ENCODE measurements at regions of chr11 and their contacts with region 1.

Region 1: DNA sequence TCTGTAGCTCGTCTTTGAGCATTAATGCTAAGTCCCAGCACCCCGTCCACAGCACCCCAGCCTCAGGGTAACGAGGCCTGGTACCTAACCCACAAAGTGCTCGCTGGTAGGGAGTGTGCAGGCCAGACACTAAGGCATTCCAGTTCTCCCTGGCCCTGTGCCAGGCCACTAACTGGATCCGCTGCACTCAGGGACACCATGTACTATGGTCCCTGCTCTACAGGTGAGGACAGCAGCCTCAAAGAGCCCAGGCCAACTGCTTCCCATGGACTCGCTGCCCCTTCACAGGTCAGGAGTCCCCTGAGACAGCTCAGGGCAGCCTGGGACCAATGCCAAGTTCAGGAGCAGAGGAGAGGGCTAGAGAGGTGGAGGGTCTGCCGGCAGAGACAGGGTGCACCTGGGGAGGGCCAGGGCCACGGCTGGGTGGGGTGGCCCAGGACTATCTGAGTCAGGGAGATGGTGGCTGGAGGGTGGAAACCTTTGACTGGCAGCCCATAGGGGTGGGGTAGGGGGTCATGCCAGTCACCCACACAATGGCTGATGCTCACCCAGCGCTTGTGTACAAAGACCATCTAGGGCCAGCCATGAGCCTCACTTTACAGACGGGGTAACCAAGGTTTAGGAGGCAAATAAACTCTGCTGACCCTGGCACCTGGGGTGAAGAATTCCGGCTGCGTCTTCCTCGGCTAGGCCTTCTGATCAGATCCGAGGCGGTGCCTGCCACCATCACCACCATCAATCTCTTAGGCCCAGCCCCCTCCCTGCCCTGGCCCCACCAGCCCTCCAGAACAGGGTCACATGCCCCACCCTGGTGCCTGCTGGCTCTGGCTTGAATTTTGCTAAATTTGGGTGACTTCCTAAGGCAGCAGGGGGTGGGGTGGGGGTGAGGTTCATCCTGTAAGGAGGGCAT is 5.6 kb downstream of the OSBPL5 start:
- DNase-seq: no peak
- ATAC-seq: no peak
- H3K4me3 ChIP-seq: peak overlapping the region; percentile 24
- H3K4me3 Mint-ChIP-seq: peak overlapping the region; percentile 93
- H3K27ac ChIP-seq: peak overlapping the region; percentile 46
- H3K27ac Mint-ChIP-seq: peak overlapping the region; percentile 89 to 93
- H3K4me1 ChIP-seq: peaks cover 99% of the 10 kb centered on the region
- H3K4me1 Mint-ChIP-seq: peaks cover 78 to 92% of the 10 kb centered on the region in 2 donors
- H3K27me3 ChIP-seq: no peaks in the 10 kb centered on the region
- H3K27me3 Mint-ChIP-seq: no peaks in the 10 kb centered on the region
- CTCF ChIP-seq: no peak

Region 2: DNA sequence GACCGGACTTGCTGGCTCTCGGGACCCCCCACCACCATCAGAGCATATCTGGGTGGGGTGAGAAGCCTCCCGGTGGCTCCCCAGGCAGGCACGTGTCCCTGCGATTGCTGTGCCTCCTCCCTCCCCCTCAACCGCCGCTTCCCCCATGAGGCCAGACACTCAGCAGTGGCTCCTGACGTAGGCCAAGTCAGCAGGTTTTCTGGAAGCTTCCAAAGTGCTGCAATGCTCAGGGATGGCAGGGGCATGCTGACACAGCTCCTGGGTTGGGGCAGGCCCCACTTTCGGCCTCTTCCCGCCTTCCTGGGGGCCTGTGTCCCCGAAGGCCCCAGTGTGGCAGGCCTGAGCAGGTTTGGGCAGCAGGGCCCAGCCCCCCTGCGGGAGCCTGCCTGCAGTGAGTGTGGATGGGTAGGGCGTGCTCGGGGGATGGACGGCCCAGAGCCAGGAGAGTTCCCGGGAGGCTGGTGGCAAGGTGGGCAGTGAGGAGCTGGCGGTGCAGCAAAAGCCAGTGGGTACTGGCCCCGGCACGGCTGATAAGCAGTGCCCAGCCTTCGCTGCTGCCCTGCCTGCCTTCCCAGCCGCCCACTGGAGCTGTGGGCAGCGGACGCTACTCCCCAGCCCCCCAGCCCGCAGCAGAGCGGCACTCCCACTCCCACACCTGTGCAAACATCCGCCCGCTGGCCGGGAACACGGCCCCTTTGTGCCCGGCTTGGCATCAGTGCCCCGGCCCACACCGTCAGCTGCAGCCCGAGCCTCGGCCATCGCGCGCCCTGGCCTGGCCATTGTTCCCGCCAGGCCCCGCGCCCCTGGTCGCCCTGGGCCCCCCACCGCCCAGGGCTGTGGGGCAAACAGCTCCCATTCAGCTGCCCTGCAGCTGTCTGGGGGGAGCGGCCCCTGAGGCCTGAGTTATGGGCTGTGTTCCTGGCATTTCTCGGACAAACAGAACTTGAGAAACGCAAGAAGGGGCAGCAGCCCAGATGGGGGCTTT is 584.7 kb before region 1 on chr11:
- intact Hi-C with region 1: no loop called
- DNase-seq: peak in 1 of 2 donors; percentile 12
- ATAC-seq: no peak
- H3K4me3 ChIP-seq: no peak overlapping the region
- H3K4me3 Mint-ChIP-seq: no peak overlapping the region
- H3K27ac ChIP-seq: no peak overlapping the region
- H3K27ac Mint-ChIP-seq: no peak overlapping the region
- H3K4me1 ChIP-seq: peaks cover 12% of the 10 kb centered on the region
- H3K4me1 Mint-ChIP-seq: no peaks in the 10 kb centered on the region
- H3K27me3 ChIP-seq: no peaks in the 10 kb centered on the region
- H3K27me3 Mint-ChIP-seq: no peaks in the 10 kb centered on the region
- CTCF ChIP-seq: no peak

Region 3: DNA sequence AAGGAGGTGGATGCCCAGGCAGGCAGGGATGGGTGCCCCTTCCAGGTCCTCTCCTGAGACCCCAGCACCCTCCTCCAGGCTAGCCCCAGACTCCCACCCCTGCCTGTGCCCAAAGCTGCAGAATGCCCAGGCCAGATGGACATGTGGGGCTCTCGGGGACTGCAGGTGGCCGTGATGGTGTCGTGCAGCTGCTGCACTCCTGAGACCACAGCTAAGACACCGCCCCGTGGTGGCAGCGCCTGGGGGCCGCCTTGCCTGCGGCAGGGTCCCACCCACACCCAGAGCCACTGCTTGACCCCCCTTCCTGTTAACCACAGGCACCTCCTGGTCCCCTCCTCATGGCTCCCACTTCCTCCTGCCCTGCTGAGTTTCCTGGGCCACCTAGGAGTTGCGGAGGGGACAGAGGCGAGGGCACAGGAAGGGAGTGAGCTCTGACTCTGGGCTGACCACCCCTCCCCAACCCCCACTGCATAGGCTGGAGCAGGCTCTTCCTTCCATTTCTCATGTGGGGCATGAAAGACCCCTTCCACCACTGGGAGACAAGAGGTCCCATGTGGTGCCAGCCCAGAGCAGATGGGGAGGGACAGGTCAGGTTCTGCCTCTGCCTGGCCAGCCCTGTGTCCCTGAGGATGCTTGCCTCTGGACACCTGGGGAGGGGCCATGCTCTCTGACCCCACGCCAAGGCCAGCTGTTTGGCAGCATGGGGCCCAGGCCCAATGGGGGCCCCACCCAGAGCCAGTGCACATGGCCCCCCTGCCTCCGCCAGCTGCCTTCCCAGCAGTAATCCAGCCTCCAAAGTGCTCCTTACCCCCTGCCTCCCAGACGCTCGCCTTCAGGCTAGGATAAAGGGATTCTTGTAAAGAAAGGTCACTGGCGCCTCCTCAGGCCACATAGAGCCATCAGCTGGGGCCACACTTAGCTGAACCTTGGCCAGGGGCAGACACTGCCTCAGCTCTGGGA is 23.8 kb before region 1 on chr11:
- intact Hi-C with region 1: loop called (anchors 2 kb)
- DNase-seq: peak in 1 of 2 donors; percentile 49
- ATAC-seq: peak; percentile 34 to 51 (median 42)
- H3K4me3 ChIP-seq: peak overlapping the region; percentile 14
- H3K4me3 Mint-ChIP-seq: peak overlapping the region; percentile 88
- H3K27ac ChIP-seq: peak overlapping the region; percentile 61
- H3K27ac Mint-ChIP-seq: peak overlapping the region; percentile 90 to 93
- H3K4me1 ChIP-seq: peaks cover 94% of the 10 kb centered on the region
- H3K4me1 Mint-ChIP-seq: peaks cover 72 to 98% of the 10 kb centered on the region in 2 donors
- H3K27me3 ChIP-seq: no peaks in the 10 kb centered on the region
- H3K27me3 Mint-ChIP-seq: no peaks in the 10 kb centered on the region
- CTCF ChIP-seq: no peak

Region 4: DNA sequence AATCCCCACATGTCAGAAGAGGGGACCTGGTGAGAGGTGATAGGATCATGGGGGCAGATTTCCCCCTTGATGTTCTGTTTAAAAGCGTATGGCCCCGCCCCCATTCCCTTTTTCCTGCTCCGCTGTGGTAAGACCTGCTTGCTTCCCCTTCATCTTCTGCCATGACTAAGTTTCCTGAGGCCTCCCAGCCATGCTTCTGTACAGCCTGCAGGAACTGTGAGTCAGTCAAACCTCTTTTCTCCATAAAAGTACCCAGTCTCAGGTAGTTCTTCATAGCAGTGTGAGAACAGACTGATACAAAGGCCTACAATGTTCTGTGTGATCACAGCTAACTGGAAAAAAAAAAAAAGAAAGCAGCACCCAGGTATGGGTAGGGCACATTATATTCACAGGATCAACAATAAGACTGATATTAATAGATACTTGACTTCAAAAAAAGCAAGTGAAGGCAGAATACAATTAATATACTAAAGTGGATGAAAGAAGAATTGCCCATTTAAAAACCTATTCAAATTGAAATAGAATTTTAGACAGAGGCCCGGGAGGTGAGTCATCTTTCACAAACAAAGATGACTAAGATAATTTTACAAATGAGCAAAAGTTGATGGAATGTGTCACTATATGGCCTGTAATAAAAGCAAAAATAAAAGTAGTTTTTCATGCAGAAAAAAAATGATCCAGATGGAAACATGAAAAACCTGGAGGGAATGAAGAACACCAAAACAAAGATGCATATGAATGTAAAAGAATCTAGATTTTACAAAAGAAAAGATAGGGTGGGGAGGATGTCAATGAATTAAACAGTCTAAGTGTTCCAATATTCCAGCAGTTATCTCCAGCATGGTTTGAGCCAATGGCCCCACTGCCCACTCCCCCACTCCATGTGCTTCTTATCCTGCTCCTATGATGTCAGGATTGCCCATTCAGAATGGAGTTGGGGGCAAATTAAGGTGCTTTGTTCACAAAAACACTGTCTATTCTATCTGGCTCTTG is 1321.3 kb after region 1 on chr11:
- intact Hi-C with region 1: no loop called
- DNase-seq: no peak
- ATAC-seq: no peak
- H3K4me3 ChIP-seq: no peak overlapping the region
- H3K4me3 Mint-ChIP-seq: no peak overlapping the region
- H3K27ac ChIP-seq: no peak overlapping the region
- H3K27ac Mint-ChIP-seq: no peak overlapping the region
- H3K4me1 ChIP-seq: no peaks in the 10 kb centered on the region
- H3K4me1 Mint-ChIP-seq: no peaks in the 10 kb centered on the region
- H3K27me3 ChIP-seq: peaks cover 2% of the 10 kb centered on the region
- H3K27me3 Mint-ChIP-seq: peaks cover 6 to 19% of the 10 kb centered on the region in 2 donors
- CTCF ChIP-seq: no peak

Measured in natural killer cell (primary cell).